Endothelial cell of umbilical vein (primary cell): ENCODE measurements at regions of chr2 and their contacts with region 1.

Region 1: GRCh38 chr2:168455648-168456520 is at the start of gene CERS6:
- DNase-seq: peak; percentile 92
- H3K4me3 ChIP-seq: peak within 1 kb of the TSS; percentile 74 to 79 (median 78)
- H3K27ac ChIP-seq: peak within 1 kb of the TSS; percentile 38
- H3K4me1 ChIP-seq: peaks cover 10% of the 10 kb centered on the region
- H3K27me3 ChIP-seq: no peaks in the 10 kb centered on the region
- CTCF ChIP-seq: no peak
- POLR2A ChIP-seq: peak; percentile 82
- total RNA-seq, gene CERS6: 11.2 and 11.7 TPM in 2 replicates

Region 2: GRCh38 chr2:168174756-168175155 is 281.1 kb before region 1 on chr2:
- CTCF ChIA-PET with region 1: no interaction called
- POLR2A ChIA-PET with region 1: no interaction called
- dilution Hi-C with region 1: no loop called
- intact Hi-C with region 1: no loop called
- DNase-seq: no peak
- H3K4me3 ChIP-seq: no peak overlapping the region
- H3K27ac ChIP-seq: no peak overlapping the region
- H3K4me1 ChIP-seq: no peaks in the 10 kb centered on the region
- H3K27me3 ChIP-seq: no peaks in the 10 kb centered on the region
- CTCF ChIP-seq: no peak
- POLR2A ChIP-seq: no peak

Region 3: DNA sequence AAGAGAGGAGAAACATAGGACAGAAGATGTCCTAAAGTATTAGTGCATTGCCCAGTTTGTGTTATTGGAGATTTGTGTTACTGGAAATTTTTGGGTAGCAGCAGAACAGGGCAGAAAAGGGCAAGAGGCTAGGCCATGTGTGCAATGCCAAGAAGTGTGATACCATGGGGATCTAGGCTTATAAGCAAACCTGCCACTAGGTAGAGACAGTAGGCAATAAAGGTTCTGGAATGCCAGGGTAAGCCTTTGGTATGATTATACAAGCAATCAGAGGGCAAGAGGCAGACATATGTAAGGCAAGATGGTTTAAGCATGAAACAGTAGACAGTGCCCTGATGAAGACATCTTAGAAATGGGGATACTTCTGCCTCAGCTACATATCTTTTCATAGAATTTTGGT is 12.1 kb before region 1 on chr2:
- CTCF ChIA-PET with region 1: no interaction called
- POLR2A ChIA-PET with region 1: no interaction called
- dilution Hi-C with region 1: no loop called
- intact Hi-C with region 1: no loop called
- DNase-seq: no peak
- H3K4me3 ChIP-seq: no peak overlapping the region
- H3K27ac ChIP-seq: no peak overlapping the region
- H3K4me1 ChIP-seq: peaks cover 4% of the 10 kb centered on the region
- H3K27me3 ChIP-seq: no peaks in the 10 kb centered on the region
- CTCF ChIP-seq: no peak
- POLR2A ChIP-seq: no peak

Region 4: DNA sequence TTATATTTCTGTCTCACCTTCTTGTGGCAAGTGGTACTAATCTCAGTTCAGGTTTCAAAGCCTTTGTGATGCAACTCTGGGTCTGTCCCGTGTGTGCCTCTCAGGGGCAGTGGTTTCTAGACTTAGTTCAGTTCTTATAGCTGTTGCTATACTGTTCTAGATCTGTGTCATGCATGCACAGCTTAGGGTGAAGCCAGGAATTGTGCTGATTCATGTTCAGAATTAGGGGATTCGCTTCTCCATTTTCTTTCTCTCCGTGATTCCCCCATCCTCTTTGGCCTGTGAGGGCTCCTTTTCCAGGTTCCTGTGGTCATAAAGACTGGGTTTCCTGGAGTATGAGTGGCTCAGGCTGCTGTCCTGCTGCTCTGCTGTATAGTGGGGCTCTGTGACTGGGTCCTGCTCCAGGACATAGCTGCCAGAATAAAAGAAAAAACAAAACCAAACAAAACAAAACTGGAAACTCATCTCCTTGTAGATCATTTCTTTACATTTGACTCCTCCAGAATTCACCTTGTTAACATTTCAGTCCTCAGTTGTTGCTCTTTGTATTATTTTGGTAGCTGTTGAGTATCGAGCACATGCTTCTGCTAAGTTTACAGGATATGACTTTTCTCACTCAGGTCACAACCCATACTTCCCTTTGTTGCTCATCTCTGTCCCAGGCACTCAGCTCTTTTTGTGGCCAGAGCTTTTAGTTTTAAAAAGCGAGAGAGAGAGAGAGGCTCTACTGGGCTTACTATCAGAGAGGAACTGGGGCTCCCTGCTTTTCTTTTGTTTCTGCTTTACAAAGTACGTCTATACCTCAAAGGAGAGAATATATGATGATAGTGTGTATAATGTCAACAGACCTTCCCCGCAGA is 34.4 kb after region 1 on chr2:
- CTCF ChIA-PET with region 1: interaction called, 3 read pairs
- POLR2A ChIA-PET with region 1: no interaction called
- dilution Hi-C with region 1: no loop called
- intact Hi-C with region 1: loop called (anchors 5 kb)
- DNase-seq: peak; percentile 46
- H3K4me3 ChIP-seq: no peak overlapping the region
- H3K27ac ChIP-seq: peak overlapping the region; percentile 20
- H3K4me1 ChIP-seq: peaks cover 15% of the 10 kb centered on the region
- H3K27me3 ChIP-seq: no peaks in the 10 kb centered on the region
- CTCF ChIP-seq: no peak
- POLR2A ChIP-seq: no peak

Region 5: GRCh38 chr2:168632709-168633121 is 176.8 kb after region 1 on chr2:
- CTCF ChIA-PET with region 1: no interaction called
- POLR2A ChIA-PET with region 1: no interaction called
- dilution Hi-C with region 1: no loop called
- intact Hi-C with region 1: loop called (anchors 5 kb)
- DNase-seq: peak; percentile 85
- H3K4me3 ChIP-seq: no peak overlapping the region
- H3K27ac ChIP-seq: peak overlapping the region; percentile 82
- H3K4me1 ChIP-seq: peaks cover 16% of the 10 kb centered on the region
- H3K27me3 ChIP-seq: no peaks in the 10 kb centered on the region
- CTCF ChIP-seq: no peak
- POLR2A ChIP-seq: no peak

Region 6: DNA sequence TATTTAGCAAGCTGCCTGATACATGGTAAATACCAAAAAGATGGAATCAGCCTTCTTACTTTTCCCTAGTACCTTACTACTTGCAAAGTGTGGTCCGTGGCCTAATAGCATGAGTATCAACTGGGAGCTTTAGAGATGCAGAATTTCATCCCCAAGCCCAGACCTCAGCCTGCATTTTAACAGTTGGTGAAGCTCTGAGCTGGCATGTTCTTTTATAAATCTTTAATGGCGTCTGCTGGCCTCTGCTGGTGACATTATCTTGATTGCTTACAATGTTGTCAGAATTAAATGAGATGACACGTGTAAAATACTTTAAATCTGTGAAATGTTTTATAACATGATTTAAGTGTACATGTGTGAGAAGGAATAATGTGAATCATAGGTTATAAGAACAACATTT is 231.4 kb after region 1 on chr2:
- CTCF ChIA-PET with region 1: no interaction called
- POLR2A ChIA-PET with region 1: no interaction called
- dilution Hi-C with region 1: no loop called
- intact Hi-C with region 1: loop called (anchors 1 kb)
- DNase-seq: peak; percentile 44
- H3K4me3 ChIP-seq: no peak overlapping the region
- H3K27ac ChIP-seq: peak overlapping the region; percentile 65
- H3K4me1 ChIP-seq: peaks cover 17% of the 10 kb centered on the region
- H3K27me3 ChIP-seq: no peaks in the 10 kb centered on the region
- CTCF ChIP-seq: no peak
- POLR2A ChIP-seq: no peak

Region 7: GRCh38 chr2:168705534-168706470 is 249.9 kb after region 1 on chr2:
- CTCF ChIA-PET with region 1: no interaction called
- POLR2A ChIA-PET with region 1: no interaction called
- dilution Hi-C with region 1: no loop called
- intact Hi-C with region 1: loop called (anchors 5 kb)
- DNase-seq: peak; percentile 29
- H3K4me3 ChIP-seq: no peak overlapping the region
- H3K27ac ChIP-seq: no peak overlapping the region
- H3K4me1 ChIP-seq: no peaks in the 10 kb centered on the region
- H3K27me3 ChIP-seq: no peaks in the 10 kb centered on the region
- CTCF ChIP-seq: peak; percentile 24 to 36
- POLR2A ChIP-seq: no peak

Region 8: DNA sequence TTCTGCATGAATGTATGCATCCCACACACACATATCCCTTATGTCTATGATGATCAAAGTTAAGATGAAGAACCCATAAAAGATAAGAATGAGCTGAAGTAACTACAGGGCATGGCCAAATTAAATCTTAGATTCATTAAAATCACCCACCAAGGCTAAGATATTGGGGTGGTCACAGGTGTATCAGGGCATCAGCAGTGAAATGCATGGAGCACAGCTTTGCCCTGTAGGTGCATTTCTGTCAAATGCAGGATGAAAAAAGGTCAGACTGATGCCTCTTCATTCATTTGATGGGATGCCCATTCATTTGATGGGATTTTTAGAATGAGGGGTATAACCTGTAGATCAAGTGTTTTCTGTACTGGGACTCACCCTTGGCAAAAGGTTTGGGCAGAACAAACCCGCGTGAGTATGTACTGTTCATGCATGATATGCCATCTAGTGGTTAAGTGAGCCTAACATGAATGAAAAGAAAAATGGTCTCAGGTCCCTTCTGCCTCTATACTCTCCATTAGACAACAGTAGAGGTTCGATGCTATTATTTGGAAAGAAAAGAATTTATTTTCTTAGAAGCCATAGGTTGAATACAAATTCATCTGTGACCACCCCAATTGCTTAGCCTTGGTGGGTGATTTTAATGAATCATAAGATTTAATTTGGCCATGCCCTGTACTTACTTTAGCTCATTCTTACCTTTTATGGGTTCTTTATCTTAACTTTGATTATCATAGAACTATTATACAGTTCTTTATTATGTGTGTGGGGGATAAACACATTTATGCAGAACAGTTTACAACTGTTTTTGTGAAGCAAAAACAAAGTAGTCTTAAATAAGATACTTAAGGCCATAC is 303.3 kb after region 1 on chr2:
- CTCF ChIA-PET with region 1: no interaction called
- POLR2A ChIA-PET with region 1: no interaction called
- dilution Hi-C with region 1: no loop called
- intact Hi-C with region 1: loop called (anchors 2 kb)
- DNase-seq: peak; percentile 58
- H3K4me3 ChIP-seq: no peak overlapping the region
- H3K27ac ChIP-seq: no peak overlapping the region
- H3K4me1 ChIP-seq: peaks cover 14% of the 10 kb centered on the region
- H3K27me3 ChIP-seq: no peaks in the 10 kb centered on the region
- CTCF ChIP-seq: peak; percentile 40 to 62
- POLR2A ChIP-seq: no peak